Activated CD8-positive, alpha-beta T cell treated with anti-CD3 and anti-CD28 coated beads for 36 hours (primary cell): ENCODE measurements at regions of chr19 and their contacts with region 1.

Region 1: GRCh38 chr19:48203732-48204628 is 33.5 kb downstream of the ZSWIM9 start:
- DNase-seq: peak; percentile 97
- ATAC-seq: peak; percentile 99
- H3K4me3 Mint-ChIP-seq: no peak overlapping the region
- H3K27ac Mint-ChIP-seq: no peak overlapping the region
- H3K4me1 Mint-ChIP-seq: peaks cover 28% of the 10 kb centered on the region
- H3K27me3 Mint-ChIP-seq: no peaks in the 10 kb centered on the region
- CTCF ChIP-seq: no peak

Region 2: GRCh38 chr19:48033604-48034003 is 170.4 kb before region 1 on chr19:
- CTCF ChIA-PET with region 1: no interaction called
- POLR2A ChIA-PET with region 1: no interaction called
- intact Hi-C with region 1: no loop called
- DNase-seq: no peak
- ATAC-seq: no peak
- H3K4me3 Mint-ChIP-seq: no peak overlapping the region
- H3K27ac Mint-ChIP-seq: no peak overlapping the region
- H3K4me1 Mint-ChIP-seq: no peaks in the 10 kb centered on the region
- H3K27me3 Mint-ChIP-seq: peaks cover 10% of the 10 kb centered on the region
- CTCF ChIP-seq: no peak

Region 3: GRCh38 chr19:48135411-48135810 is 68.6 kb before region 1 on chr19:
- CTCF ChIA-PET with region 1: no interaction called
- POLR2A ChIA-PET with region 1: no interaction called
- intact Hi-C with region 1: no loop called
- DNase-seq: peak; percentile 42
- ATAC-seq: no peak
- H3K4me3 Mint-ChIP-seq: no peak overlapping the region
- H3K27ac Mint-ChIP-seq: no peak overlapping the region
- H3K4me1 Mint-ChIP-seq: no peaks in the 10 kb centered on the region
- H3K27me3 Mint-ChIP-seq: no peaks in the 10 kb centered on the region
- CTCF ChIP-seq: no peak

Region 4: DNA sequence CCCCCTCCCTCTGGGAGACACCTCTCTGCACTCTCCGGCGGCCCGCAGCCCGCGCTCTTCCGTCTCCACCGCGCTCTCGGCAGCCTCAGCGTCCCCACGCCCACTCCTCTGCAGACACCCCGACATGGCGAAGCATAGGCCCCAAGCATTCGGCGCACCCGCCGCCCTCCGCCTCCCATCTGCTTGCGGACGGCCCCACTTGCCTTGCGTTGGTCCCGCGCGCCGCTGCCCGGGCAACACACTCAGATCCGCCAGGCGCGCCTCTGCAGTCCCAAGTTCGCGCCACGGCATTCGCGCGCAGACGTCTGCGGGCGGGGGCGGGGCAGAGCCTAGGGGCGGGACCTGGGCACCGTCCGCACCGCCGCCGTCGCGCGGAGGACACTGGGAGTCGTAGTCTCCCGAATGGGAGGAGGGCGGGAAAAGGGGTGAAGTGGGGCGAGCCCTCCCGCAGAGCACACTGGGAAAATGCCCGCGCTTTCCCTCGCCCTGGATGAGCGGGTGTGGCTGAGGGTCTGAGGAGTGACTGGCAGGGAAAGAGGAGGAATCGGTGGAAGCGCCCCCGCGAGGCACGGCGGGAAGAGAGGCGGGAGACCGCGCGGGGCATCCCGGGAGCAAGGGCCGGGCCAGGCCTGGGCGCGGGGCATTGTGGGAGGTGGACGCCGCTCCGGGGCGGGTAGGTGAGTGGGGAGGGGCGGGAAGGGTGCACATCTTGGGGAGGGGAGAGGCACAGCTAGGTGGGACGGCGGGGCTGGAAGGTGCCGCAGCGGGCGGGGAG is 33.8 kb before region 1 on chr19 and contains the starts of genes LIG1 and ZSWIM9:
- CTCF ChIA-PET with region 1: interaction called, 5 read pairs
- POLR2A ChIA-PET with region 1: interaction called, 15 read pairs
- intact Hi-C with region 1: no loop called
- DNase-seq: peak; percentile 92
- ATAC-seq: peak; percentile 87
- H3K4me3 Mint-ChIP-seq: peak within 1 kb of the TSS; percentile 82
- H3K27ac Mint-ChIP-seq: peak within 1 kb of the TSS; percentile 99
- H3K4me1 Mint-ChIP-seq: peaks cover 31% of the 10 kb centered on the region
- H3K27me3 Mint-ChIP-seq: no peaks in the 10 kb centered on the region
- CTCF ChIP-seq: no peak
- total RNA-seq, gene LIG1: 181 to 188 TPM
- total RNA-seq, gene ZSWIM9: 8.4 to 9.5 TPM

Region 5: DNA sequence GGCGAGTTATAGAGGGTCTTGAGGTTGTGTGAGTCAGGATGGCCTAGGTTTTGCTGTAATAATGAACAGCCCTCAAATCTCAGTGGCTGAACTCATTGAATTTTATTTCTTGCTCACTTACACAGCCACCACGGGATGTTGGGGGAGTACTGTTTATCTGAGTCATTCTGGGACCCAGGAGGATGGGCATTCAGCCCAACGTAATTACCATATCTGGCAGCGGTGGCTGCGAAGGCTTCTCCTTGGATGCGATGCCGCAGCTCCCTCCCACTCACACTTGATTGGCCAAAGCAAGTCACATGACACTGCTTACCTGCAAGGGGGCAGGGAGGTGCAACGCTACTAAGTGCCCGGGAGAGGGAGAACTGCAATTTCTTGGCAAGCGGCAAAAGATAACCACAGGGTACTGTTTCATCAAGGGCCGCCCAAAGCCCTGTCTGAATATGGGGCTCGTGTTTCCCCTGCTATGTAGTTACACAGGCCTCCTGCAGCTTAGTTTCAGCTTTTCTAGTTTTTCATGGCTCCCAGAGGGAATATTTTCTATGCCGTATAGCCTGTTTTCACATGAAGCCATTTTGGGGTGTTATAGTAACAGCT is 13.6 kb before region 1 on chr19:
- CTCF ChIA-PET with region 1: interaction called, 26 read pairs
- POLR2A ChIA-PET with region 1: interaction called, 9 read pairs
- intact Hi-C with region 1: no loop called
- DNase-seq: peak; percentile 83
- ATAC-seq: peak; percentile 89
- H3K4me3 Mint-ChIP-seq: no peak overlapping the region
- H3K27ac Mint-ChIP-seq: peak overlapping the region; percentile 32
- H3K4me1 Mint-ChIP-seq: peaks cover 11% of the 10 kb centered on the region
- H3K27me3 Mint-ChIP-seq: no peaks in the 10 kb centered on the region
- CTCF ChIP-seq: peak; percentile 28

Region 6: GRCh38 chr19:48249502-48250014 is 45.6 kb after region 1 on chr19:
- CTCF ChIA-PET with region 1: interaction called, 9 read pairs
- POLR2A ChIA-PET with region 1: interaction called, 15 read pairs
- intact Hi-C with region 1: no loop called
- DNase-seq: peak; percentile 95
- ATAC-seq: peak; percentile 82
- H3K4me3 Mint-ChIP-seq: peak overlapping the region; percentile 85
- H3K27ac Mint-ChIP-seq: peak overlapping the region; percentile 99
- H3K4me1 Mint-ChIP-seq: peaks cover 65% of the 10 kb centered on the region
- H3K27me3 Mint-ChIP-seq: no peaks in the 10 kb centered on the region
- CTCF ChIP-seq: no peak

Region 7: DNA sequence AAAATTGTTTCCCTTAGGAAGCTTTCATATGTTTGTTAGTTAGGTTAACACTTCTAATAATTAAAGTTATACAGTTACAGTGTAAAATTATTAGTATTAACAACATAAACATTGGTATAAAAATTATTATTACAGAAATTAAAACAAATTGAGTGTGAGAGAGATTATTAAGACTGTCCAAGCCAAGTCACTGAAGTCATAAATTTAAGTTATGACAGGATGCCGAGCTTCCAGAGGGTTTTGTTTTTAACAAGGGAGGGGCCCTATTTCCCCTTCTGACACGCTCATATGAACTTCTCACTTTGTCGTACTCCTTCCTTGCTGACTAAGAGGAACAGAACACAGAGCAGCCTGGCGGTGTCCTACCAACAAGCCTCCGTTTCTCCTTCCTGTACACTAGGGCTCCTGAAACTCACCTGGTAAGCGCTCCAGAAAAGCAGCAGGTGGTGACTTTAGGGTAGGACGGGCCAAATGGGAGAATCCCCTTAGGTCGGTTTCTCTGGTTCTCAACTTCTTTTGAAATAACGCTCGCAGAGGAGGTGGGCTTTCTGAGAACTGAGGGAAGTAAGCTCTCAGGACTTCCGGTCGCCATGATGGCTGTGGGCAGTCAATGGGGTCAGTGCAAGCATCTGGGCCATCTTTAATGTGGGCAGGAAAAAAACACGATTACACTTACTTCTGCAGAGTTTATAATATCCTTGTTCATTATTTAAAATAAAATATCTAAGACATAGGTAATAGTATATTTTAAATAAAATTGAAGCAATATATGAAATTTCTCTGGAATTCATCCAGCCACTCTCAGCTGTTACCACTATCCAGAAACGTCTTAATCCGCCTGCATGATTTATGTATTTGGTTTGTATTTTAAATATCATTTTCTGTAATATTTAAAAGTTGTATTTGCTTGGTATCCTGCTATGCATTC is 51.7 kb after region 1 on chr19 and contains the start of gene CARD8:
- CTCF ChIA-PET with region 1: interaction called, 32 read pairs
- POLR2A ChIA-PET with region 1: interaction called, 25 read pairs
- intact Hi-C with region 1: loop called (anchors 5 kb)
- DNase-seq: peak; percentile 89
- ATAC-seq: peak; percentile 87
- H3K4me3 Mint-ChIP-seq: peak within 1 kb of the TSS; percentile 89
- H3K27ac Mint-ChIP-seq: peak within 1 kb of the TSS; percentile 100
- H3K4me1 Mint-ChIP-seq: peaks cover 59% of the 10 kb centered on the region
- H3K27me3 Mint-ChIP-seq: no peaks in the 10 kb centered on the region
- CTCF ChIP-seq: no peak
- total RNA-seq, gene CARD8: 109 TPM